ENCODE measurements at regions of chr12 and their contacts with region 1.

Region 1: GRCh38 chr12:115648463-115648862 is 629.0 kb downstream of the MED13L start:
- DNase-seq: no peak
- ATAC-seq: no peak
- H3K4me3 ChIP-seq: no peak overlapping the region
- H3K27ac ChIP-seq: no peak overlapping the region
- H3K4me1 ChIP-seq: no peaks in the 10 kb centered on the region
- H3K27me3 ChIP-seq: no peaks in the 10 kb centered on the region

Region 2: DNA sequence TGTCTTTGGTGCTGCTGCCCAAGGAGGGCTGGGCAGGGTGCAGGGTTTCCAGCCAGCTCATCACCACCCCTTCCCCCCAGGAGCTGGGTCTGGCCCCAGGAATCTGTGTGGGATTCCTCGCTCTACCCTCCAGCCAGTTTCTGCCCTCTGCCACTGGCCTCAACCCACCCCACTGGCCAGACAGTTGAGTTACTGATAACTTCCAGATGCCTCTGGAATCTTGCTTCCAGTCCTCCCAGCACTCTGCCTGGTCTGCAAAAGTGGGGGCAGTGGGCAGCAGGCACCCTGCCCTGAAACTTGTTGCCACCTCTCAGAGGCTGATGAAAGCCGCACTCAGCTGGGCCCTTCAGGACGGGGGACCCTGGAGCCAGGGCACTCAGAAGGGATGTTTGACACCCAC is 944.4 kb before region 1 on chr12:
- intact Hi-C with region 1: loop called in 1 of 2 experiments (anchors 5 kb)
- DNase-seq: no peak
- ATAC-seq: no peak
- H3K4me3 ChIP-seq: no peak overlapping the region
- H3K27ac ChIP-seq: no peak overlapping the region
- H3K4me1 ChIP-seq: no peaks in the 10 kb centered on the region
- H3K27me3 ChIP-seq: peaks cover 0 to 2% of the 10 kb centered on the region in 2 donors